ENCODE measurements at regions of chr4 and their contacts with region 1.

Region 1: GRCh38 chr4:145061318-145061920 is 36.6 kb downstream of the ANAPC10 start:
- DNase-seq: no peak
- ATAC-seq: peak in 1 of 2 donors; percentile 41
- H3K4me3 ChIP-seq: no peak overlapping the region
- H3K27ac ChIP-seq: no peak overlapping the region
- H3K4me1 ChIP-seq: no peaks in the 10 kb centered on the region
- H3K27me3 ChIP-seq: no peaks in the 10 kb centered on the region

Region 2: GRCh38 chr4:144174401-144175067 is 886.9 kb before region 1 on chr4:
- intact Hi-C with region 1: loop called in 3 of 4 experiments (anchors 10 kb)
- DNase-seq: no peak
- ATAC-seq: peak; percentile 43 to 81
- H3K4me3 ChIP-seq: no peak overlapping the region
- H3K27ac ChIP-seq: no peak overlapping the region
- H3K4me1 ChIP-seq: no peaks in the 10 kb centered on the region
- H3K27me3 ChIP-seq: no peaks in the 10 kb centered on the region

Region 3: GRCh38 chr4:145099653-145100052 is 38.2 kb after region 1 on chr4:
- intact Hi-C with region 1: no loop called
- DNase-seq: no peak
- ATAC-seq: no peak
- H3K4me3 ChIP-seq: peak overlapping the region; percentile 96
- H3K27ac ChIP-seq: no peak overlapping the region
- H3K4me1 ChIP-seq: peaks cover 2% of the 10 kb centered on the region
- H3K27me3 ChIP-seq: no peaks in the 10 kb centered on the region